PC-9 (cell line): ENCODE measurements at regions of chr1 and their contacts with region 1.

Region 1: GRCh38 chr1:38958967-38959366 is 17.3 kb upstream of the RHBDL2 start:
- DNase-seq: peak; percentile 71 to 92
- H3K4me3 ChIP-seq: peak overlapping the region; percentile 23; the same call in 1 of the 2 replicates
- H3K27ac ChIP-seq: peak overlapping the region; percentile 95
- H3K4me1 ChIP-seq: peaks cover 55% of the 10 kb centered on the region
- H3K27me3 ChIP-seq: no peaks in the 10 kb centered on the region
- CTCF ChIP-seq: no peak

Region 2: GRCh38 chr1:38138498-38139233 is 820.3 kb before region 1 on chr1:
- CTCF ChIA-PET with region 1: no interaction called
- POLR2A ChIA-PET with region 1: no interaction called
- intact Hi-C with region 1: loop called (anchors 10 kb)
- DNase-seq: peak; percentile 99
- H3K4me3 ChIP-seq: no peak overlapping the region; the same call in 1 of the 2 replicates
- H3K27ac ChIP-seq: peak overlapping the region; percentile 48
- H3K4me1 ChIP-seq: peaks cover 58% of the 10 kb centered on the region
- H3K27me3 ChIP-seq: no peaks in the 10 kb centered on the region
- CTCF ChIP-seq: no peak

Region 3: DNA sequence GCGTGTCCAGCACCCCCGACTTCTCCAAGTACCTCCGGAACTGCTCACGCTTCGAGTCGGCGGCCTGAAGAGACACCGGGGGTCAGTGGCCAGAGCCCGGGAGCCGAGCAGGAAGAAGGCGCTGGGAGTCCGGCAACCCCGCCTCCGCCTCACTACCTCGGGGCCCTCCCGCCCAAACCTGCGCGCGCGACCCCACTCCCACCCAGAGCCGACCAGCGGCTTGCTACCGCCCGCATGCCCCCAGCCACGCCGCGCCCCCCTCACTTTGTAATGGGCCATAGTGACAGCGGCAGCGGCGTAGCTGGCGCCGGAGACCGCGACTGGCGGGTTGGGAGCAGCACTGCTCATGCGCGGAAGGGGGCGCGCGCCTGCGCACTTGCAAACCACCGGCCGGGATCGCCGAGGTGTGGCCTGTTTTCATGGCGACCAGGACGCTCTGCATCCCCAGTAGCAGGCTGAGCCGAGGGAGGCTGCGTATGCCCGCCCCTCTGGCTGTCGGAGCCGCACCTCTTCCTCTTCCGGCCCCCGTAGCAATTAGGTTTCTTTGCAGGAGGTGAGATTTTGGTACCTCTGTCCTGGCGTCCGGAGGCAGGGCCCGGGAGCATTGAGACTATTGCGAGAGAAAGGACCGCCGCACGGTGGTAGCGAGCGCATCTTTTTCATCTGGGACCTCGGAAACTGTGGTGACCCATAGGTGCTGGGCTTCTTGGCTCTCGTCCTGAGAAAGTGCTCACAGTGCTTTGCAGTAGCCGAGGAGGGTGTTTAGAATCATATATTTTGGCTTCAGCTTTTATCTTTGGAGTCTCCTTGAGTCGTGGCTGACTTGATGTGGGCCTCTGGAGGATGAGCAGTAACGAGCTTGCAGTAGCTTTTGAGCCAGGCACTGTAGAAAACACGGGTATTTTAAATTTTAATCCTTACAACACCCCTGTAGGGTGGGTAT is 85.7 kb before region 1 on chr1 and contains the start of gene MYCBP:
- CTCF ChIA-PET with region 1: interaction called, 4 read pairs
- POLR2A ChIA-PET with region 1: no interaction called
- intact Hi-C with region 1: loop called (anchors 2 kb)
- DNase-seq: peak; percentile 89 to 99
- H3K4me3 ChIP-seq: peak within 1 kb of the TSS; percentile 88
- H3K27ac ChIP-seq: no peak within 1 kb of the TSS
- H3K4me1 ChIP-seq: peaks cover 15% of the 10 kb centered on the region
- H3K27me3 ChIP-seq: no peaks in the 10 kb centered on the region
- CTCF ChIP-seq: peak; percentile 37; the same call in 1 of the 2 replicates
- total RNA-seq, gene MYCBP: 51.9 TPM in 2 replicates

Region 4: GRCh38 chr1:38990738-38991639 is 32.0 kb after region 1 on chr1 and contains the start of gene AKIRIN1:
- CTCF ChIA-PET with region 1: interaction called, 3 read pairs
- POLR2A ChIA-PET with region 1: interaction called, 7 read pairs
- intact Hi-C with region 1: loop called (anchors 1 kb)
- DNase-seq: peak; percentile 86 to 100
- H3K4me3 ChIP-seq: peak within 1 kb of the TSS; percentile 90
- H3K27ac ChIP-seq: peak within 1 kb of the TSS; percentile 33; the same call in 1 of the 2 replicates
- H3K4me1 ChIP-seq: peaks cover 37% of the 10 kb centered on the region
- H3K27me3 ChIP-seq: no peaks in the 10 kb centered on the region
- CTCF ChIP-seq: 0 out of 2 replicates have a peak, but pooled peaks have one; percentile 21
- total RNA-seq, gene AKIRIN1: 76.9 and 80.0 TPM in 2 replicates

Region 5: GRCh38 chr1:39091845-39092645 is 133.1 kb after region 1 on chr1:
- CTCF ChIA-PET with region 1: interaction called, 14 read pairs
- POLR2A ChIA-PET with region 1: interaction called, 7 read pairs
- intact Hi-C with region 1: loop called (anchors 1 kb)
- DNase-seq: peak; percentile 70 to 71
- H3K4me3 ChIP-seq: no peak overlapping the region
- H3K27ac ChIP-seq: no peak overlapping the region
- H3K4me1 ChIP-seq: peaks cover 12% of the 10 kb centered on the region
- H3K27me3 ChIP-seq: no peaks in the 10 kb centered on the region
- CTCF ChIP-seq: peak; percentile 84